Heart right ventricle (tissue), 16 donors: ENCODE measurements at regions of chr3 and their contacts with region 1.

Region 1: DNA sequence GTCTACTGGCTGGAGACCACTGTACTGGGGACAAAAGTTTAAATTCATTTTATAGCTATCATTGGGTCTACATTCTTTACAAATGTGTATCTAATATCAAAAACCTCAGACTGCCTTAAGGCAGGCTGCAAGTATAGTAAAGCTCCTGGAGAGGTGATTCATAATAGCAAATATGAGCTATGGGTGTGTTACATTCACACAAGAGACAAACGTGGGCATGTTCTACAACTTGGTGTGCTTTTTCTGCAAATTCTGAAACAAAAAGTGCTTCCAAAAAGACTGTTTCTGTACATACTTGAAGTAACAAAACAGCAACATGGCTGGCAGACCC is 1101.4 kb downstream of the ROBO1 start:
- DNase-seq: no peak
- ATAC-seq: no peak
- H3K4me3 ChIP-seq: no peak overlapping the region
- H3K27ac ChIP-seq: no peak overlapping the region
- H3K4me1 ChIP-seq: no peaks in the 10 kb centered on the region
- H3K27me3 ChIP-seq: no peaks in the 10 kb centered on the region
- CTCF ChIP-seq: no peak

Region 2: GRCh38 chr3:78221300-78221699 is 445.1 kb before region 1 on chr3:
- intact Hi-C with region 1: no loop called
- DNase-seq: no peak
- ATAC-seq: no peak
- H3K4me3 ChIP-seq: no peak overlapping the region
- H3K27ac ChIP-seq: no peak overlapping the region
- H3K4me1 ChIP-seq: no peaks in the 10 kb centered on the region
- H3K27me3 ChIP-seq: no peaks in the 10 kb centered on the region
- CTCF ChIP-seq: no peak

Region 3: GRCh38 chr3:78728406-78729145 is 62.1 kb after region 1 on chr3:
- intact Hi-C with region 1: loop called in 1 of 10 experiments (anchors 10 kb)
- DNase-seq: peak; percentile 52 to 61
- ATAC-seq: peak in 7 of 8 donors; percentile 69 to 91 (median 78)
- H3K4me3 ChIP-seq: no peak overlapping the region
- H3K27ac ChIP-seq: no peak overlapping the region
- H3K4me1 ChIP-seq: peaks cover 0 to 17% (median 0%) of the 10 kb centered on the region in 9 donors
- H3K27me3 ChIP-seq: no peaks in the 10 kb centered on the region
- CTCF ChIP-seq: no peak

Region 4: GRCh38 chr3:79027593-79027992 is 361.2 kb after region 1 on chr3:
- intact Hi-C with region 1: loop called in 4 of 10 experiments (anchors 2 to 10 kb)
- DNase-seq: no peak
- ATAC-seq: no peak
- H3K4me3 ChIP-seq: no peak overlapping the region
- H3K27ac ChIP-seq: no peak overlapping the region
- H3K4me1 ChIP-seq: no peaks in the 10 kb centered on the region
- H3K27me3 ChIP-seq: no peaks in the 10 kb centered on the region
- CTCF ChIP-seq: no peak

Region 5: GRCh38 chr3:79354179-79354688 is 687.8 kb after region 1 on chr3:
- intact Hi-C with region 1: loop called in 1 of 10 experiments (anchors 10 kb)
- DNase-seq: no peak
- ATAC-seq: peak in 1 of 8 donors; percentile 39
- H3K4me3 ChIP-seq: no peak overlapping the region
- H3K27ac ChIP-seq: no peak overlapping the region
- H3K4me1 ChIP-seq: no peaks in the 10 kb centered on the region
- H3K27me3 ChIP-seq: no peaks in the 10 kb centered on the region
- CTCF ChIP-seq: no peak

Region 6: DNA sequence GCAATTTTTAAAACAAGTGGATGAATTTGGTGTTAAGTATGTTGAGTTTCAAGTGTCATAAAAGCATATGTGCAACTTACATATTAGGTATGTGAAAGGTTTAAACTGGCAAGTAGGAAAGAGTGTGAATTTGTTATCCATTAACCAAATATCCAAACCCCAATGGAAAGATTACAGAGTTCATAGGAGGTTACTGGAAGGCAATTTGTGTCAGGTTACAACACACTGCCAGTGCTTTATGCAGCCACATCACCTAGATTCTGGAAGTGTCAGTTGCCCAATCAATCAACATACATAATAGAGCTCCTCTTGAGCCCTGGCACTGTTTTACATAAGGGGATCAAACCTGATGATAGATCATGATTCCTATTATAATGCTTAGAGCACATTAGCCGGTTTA is 840.3 kb after region 1 on chr3:
- intact Hi-C with region 1: loop called in 1 of 10 experiments (anchors 10 kb)
- DNase-seq: no peak
- ATAC-seq: no peak
- H3K4me3 ChIP-seq: no peak overlapping the region
- H3K27ac ChIP-seq: no peak overlapping the region
- H3K4me1 ChIP-seq: no peaks in the 10 kb centered on the region
- H3K27me3 ChIP-seq: no peaks in the 10 kb centered on the region
- CTCF ChIP-seq: no peak